ENCODE measurements at regions of chr9 and their contacts with region 1.

Region 1: GRCh38 chr9:18442629-18443491 is 31.1 kb upstream of the ADAMTSL1 start:
- DNase-seq: peak; percentile 86
- H3K4me3 ChIP-seq: no peak overlapping the region
- H3K27ac ChIP-seq: peak overlapping the region in 3 of 4 donors; percentile 11 to 39 (median 35)
- H3K4me1 ChIP-seq: peaks cover 0 to 41% (median 34%) of the 10 kb centered on the region in 4 donors
- H3K27me3 ChIP-seq: no peaks in the 10 kb centered on the region
- CTCF ChIP-seq: peak; percentile 33 to 91 (median 78)
- EP300 ChIP-seq: no peak
- POLR2A ChIP-seq: no peak

Region 2: DNA sequence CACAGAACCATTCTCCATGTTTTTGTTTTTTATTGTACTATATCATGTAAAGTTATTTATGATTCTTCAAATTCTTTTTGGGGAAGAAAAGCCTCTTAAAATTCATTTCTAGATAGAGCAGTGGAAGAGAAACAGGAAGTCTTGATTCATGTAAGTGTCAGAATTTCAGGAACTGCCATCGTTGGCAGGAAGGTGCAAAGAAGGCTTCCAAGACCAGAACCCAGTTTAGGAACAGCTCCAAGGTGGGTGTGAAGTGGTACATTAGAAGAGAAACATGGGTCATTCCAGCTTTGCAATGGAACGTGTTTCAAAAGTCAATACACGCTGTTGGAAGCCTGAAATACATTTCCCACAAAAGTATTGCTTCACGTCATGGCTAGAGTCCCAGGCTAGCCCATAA is 575.3 kb after region 1 on chr9:
- intact Hi-C with region 1: loop called (anchors 5 kb)
- DNase-seq: no peak
- H3K4me3 ChIP-seq: no peak overlapping the region
- H3K27ac ChIP-seq: no peak overlapping the region
- H3K4me1 ChIP-seq: no peaks in the 10 kb centered on the region
- H3K27me3 ChIP-seq: no peaks in the 10 kb centered on the region
- CTCF ChIP-seq: no peak
- EP300 ChIP-seq: no peak
- POLR2A ChIP-seq: no peak

Region 3: DNA sequence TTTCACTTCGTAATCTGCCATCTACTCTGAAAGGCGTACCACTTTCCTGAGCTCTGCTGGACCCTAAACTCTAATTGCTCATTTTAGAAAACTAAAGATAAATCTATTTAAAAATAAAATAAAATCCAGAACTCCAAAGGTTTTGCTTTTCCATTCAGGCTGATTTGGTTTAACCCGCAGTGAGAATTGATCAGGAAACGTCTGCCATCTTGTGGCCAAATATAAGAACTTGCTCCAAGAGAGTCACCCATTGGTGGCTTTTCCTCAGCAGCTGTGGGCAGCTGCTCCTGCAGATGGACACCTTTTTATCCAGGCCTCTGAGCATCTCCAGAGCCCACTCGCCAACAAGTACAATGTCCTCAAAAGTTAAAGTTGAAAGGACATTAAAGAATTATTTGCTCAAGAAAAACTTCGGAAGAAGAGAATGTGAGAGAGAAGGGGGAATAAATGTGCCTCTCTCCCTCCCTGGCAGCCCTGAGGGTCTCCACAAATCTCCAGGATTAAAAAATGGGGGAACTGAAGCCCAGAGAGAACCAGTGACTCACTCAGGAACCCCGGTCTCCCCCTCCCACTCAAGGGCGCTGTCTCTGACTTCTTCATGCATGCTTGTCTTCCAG is 586.1 kb after region 1 on chr9:
- intact Hi-C with region 1: loop called (anchors 5 kb)
- DNase-seq: no peak
- H3K4me3 ChIP-seq: no peak overlapping the region
- H3K27ac ChIP-seq: no peak overlapping the region
- H3K4me1 ChIP-seq: no peaks in the 10 kb centered on the region
- H3K27me3 ChIP-seq: peaks cover 0 to 4% (median 0%) of the 10 kb centered on the region in 3 donors
- CTCF ChIP-seq: peak; percentile 34 to 80 (median 62)
- EP300 ChIP-seq: no peak
- POLR2A ChIP-seq: no peak